AG04449 (cell line): ENCODE measurements at regions of chr11 and their contacts with region 1.

Region 1: GRCh38 chr11:118689851-118690552 is 10.6 kb upstream of the TREH start:
- DNase-seq: peak; percentile 38
- H3K4me3 ChIP-seq: peak overlapping the region; percentile 47
- CTCF ChIP-seq: peak; percentile 99

Region 2: GRCh38 chr11:118659314-118659952 is 30.6 kb before region 1 on chr11:
- CTCF ChIA-PET with region 1: interaction called, 10 read pairs
- POLR2A ChIA-PET with region 1: no interaction called
- DNase-seq: no peak
- H3K4me3 ChIP-seq: no peak overlapping the region
- CTCF ChIP-seq: peak; percentile 98

Region 3: DNA sequence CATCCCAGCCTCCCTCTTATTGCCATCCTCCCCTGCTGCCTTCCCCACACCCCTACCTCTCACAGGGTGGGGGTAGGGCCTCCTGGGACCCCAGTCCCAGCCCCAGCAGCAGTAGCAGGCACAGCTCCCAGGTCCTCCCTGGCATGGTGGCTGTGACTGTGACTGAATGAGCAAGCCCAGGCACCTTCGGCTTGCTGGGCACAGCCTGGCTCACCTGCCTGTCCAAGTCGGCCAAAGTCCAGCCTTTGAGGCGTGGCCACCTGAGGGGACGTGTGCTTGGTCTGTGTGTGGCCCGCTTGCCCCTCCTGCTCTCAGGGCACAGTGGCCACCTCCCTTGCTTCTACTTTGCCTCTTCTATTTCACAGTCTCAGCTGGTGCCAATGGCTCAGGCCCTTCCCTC is 10.5 kb before region 1 on chr11 and contains the start of gene TREH:
- CTCF ChIA-PET with region 1: interaction called, 47 read pairs
- POLR2A ChIA-PET with region 1: no interaction called
- DNase-seq: no peak
- H3K4me3 ChIP-seq: no peak within 1 kb of the TSS
- CTCF ChIP-seq: no peak

Region 4: GRCh38 chr11:118791111-118791965 is 101.3 kb after region 1 on chr11 and contains the start of gene DDX6:
- CTCF ChIA-PET with region 1: interaction called, 34 read pairs
- POLR2A ChIA-PET with region 1: no interaction called
- DNase-seq: no peak
- H3K4me3 ChIP-seq: peak within 1 kb of the TSS; percentile 82
- CTCF ChIP-seq: peak; percentile 67

Region 5: DNA sequence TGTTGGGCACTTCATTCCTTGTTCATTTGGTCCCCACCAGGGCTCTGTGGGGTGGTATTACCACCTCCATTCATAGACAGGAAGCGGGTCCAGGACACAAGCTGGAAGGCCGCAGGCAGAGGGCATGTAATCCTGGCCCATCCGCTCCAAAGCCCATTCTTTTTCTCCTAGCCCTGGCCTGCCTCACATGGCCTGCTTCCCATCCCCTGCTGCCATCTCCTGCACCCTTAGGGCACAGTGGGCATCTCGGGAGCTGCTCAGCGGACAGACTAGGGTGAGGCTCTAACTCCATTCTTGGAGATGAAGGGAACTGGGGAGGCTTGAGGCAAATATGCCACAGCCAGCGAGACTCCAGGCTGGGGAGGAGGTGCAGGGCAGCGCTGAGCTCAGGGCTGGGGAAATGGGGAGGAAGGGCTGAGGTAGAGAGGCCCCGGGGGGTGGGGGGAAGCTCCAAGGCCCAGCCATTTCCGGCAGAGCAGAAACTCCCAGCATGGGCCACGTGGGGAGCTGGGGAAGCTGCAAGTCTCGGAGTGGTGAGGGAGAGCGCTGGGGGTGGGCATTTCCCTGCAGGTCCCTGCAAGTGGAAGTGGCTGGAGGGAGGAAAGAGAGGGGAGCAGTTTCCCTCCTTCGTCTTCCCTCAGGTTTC is 250.1 kb after region 1 on chr11:
- CTCF ChIA-PET with region 1: interaction called, 17 read pairs
- POLR2A ChIA-PET with region 1: no interaction called
- DNase-seq: no peak
- H3K4me3 ChIP-seq: no peak overlapping the region
- CTCF ChIP-seq: no peak